B cell (primary cell): ENCODE measurements at regions of chr10 and their contacts with region 1.

Region 1: DNA sequence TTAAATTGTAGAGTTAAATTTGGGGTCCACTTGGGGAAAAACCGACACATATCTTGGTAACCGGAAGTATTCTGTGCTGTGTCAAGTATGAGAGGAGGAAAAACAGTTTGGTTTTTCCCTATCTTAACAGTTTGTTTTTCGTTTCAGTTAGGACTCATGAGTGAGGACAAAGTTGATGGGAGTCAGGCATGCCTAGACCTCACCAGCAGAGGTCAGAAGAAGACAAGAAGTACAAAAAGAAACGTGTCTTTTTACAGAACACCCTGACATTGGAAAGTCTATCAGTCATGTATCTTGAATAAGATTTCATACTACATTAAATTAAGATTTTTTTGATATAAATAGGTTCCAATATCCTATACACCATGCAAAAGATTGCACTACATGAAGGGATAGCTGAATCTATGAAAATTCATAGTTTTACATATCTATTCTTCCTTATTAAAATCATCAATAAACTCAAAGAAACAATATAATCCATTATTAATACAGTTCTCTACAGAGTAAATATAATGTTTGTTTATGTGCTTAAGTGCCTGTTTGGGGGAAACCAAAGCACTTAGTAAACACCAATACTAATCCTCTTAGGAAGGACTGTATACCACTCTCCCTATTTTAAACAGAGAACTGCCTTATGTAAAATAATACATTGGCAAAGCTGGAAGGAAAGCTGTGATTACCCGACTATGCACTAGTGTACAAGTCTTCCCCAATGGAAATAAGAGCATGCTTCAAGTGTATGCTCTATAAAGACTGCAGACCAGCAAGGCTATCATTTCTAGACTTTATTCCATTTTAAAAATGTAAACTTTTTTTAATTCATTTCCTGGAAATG is 95.6 kb downstream of the USP6NL start:
- DNase-seq: peak; percentile 79
- ATAC-seq: peak; percentile 84
- H3K4me3 ChIP-seq: peak overlapping the region in 1 of 5 experiments; percentile 2
- H3K4me3 Mint-ChIP-seq: peak overlapping the region; percentile 18
- H3K27ac ChIP-seq: peak overlapping the region in 1 of 2 donors; percentile 48
- H3K27ac Mint-ChIP-seq: peak overlapping the region; percentile 80
- H3K4me1 ChIP-seq: peaks cover 22% of the 10 kb centered on the region in 2 donors
- H3K4me1 Mint-ChIP-seq: peaks cover 46% of the 10 kb centered on the region
- H3K27me3 ChIP-seq: no peaks in the 10 kb centered on the region
- H3K27me3 Mint-ChIP-seq: no peaks in the 10 kb centered on the region
- CTCF ChIP-seq: peak; percentile 97

Region 2: GRCh38 chr10:11260170-11260569 is 255.6 kb before region 1 on chr10:
- CTCF ChIA-PET with region 1: no interaction called
- POLR2A ChIA-PET with region 1: no interaction called
- intact Hi-C with region 1: no loop called
- DNase-seq: no peak
- ATAC-seq: no peak
- H3K4me3 ChIP-seq: no peak overlapping the region
- H3K4me3 Mint-ChIP-seq: no peak overlapping the region
- H3K27ac ChIP-seq: peak overlapping the region in 1 of 2 donors; percentile 70
- H3K27ac Mint-ChIP-seq: peak overlapping the region; percentile 62
- H3K4me1 ChIP-seq: peaks cover 59 to 71% of the 10 kb centered on the region in 2 donors
- H3K4me1 Mint-ChIP-seq: peaks cover 85% of the 10 kb centered on the region
- H3K27me3 ChIP-seq: no peaks in the 10 kb centered on the region
- H3K27me3 Mint-ChIP-seq: no peaks in the 10 kb centered on the region
- CTCF ChIP-seq: no peak

Region 3: GRCh38 chr10:11397980-11398580 is 117.7 kb before region 1 on chr10:
- CTCF ChIA-PET with region 1: no interaction called
- POLR2A ChIA-PET with region 1: no interaction called
- intact Hi-C with region 1: no loop called
- DNase-seq: no peak
- ATAC-seq: no peak
- H3K4me3 ChIP-seq: no peak overlapping the region
- H3K4me3 Mint-ChIP-seq: no peak overlapping the region
- H3K27ac ChIP-seq: no peak overlapping the region
- H3K27ac Mint-ChIP-seq: no peak overlapping the region
- H3K4me1 ChIP-seq: peaks cover 20 to 21% of the 10 kb centered on the region in 2 donors
- H3K4me1 Mint-ChIP-seq: peaks cover 23% of the 10 kb centered on the region
- H3K27me3 ChIP-seq: no peaks in the 10 kb centered on the region
- H3K27me3 Mint-ChIP-seq: peaks cover 2% of the 10 kb centered on the region
- CTCF ChIP-seq: no peak

Region 4: DNA sequence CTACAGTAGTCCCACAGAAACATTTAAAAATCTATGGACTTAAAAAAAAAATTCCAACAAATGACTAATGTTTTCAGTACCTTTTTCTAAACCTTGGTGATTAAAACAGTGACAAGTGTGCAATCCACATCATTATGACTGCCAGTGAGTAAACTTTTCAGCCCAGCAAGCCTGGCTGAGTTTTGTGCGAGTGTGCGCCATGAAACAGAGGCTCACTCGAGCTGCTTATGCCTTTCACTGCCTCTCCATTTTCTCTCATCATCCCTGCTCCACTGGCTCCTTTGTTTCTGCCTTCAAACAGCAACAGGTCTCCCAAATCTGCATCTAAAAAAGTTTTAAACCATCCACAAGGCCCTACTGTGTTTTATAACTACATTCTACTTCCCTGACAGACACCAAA is 10.2 kb before region 1 on chr10:
- CTCF ChIA-PET with region 1: interaction called, 14 read pairs
- POLR2A ChIA-PET with region 1: no interaction called
- intact Hi-C with region 1: no loop called
- DNase-seq: no peak
- ATAC-seq: no peak
- H3K4me3 ChIP-seq: no peak overlapping the region
- H3K4me3 Mint-ChIP-seq: no peak overlapping the region
- H3K27ac ChIP-seq: no peak overlapping the region
- H3K27ac Mint-ChIP-seq: peak overlapping the region; percentile 28
- H3K4me1 ChIP-seq: no peaks in the 10 kb centered on the region
- H3K4me1 Mint-ChIP-seq: peaks cover 21% of the 10 kb centered on the region
- H3K27me3 ChIP-seq: no peaks in the 10 kb centered on the region
- H3K27me3 Mint-ChIP-seq: no peaks in the 10 kb centered on the region
- CTCF ChIP-seq: no peak

Region 5: GRCh38 chr10:11533328-11533781 is 17.5 kb after region 1 on chr10:
- CTCF ChIA-PET with region 1: interaction called, 12 read pairs
- POLR2A ChIA-PET with region 1: interaction called, 3 read pairs
- intact Hi-C with region 1: loop called (anchors 2 kb)
- DNase-seq: peak; percentile 37
- ATAC-seq: no peak
- H3K4me3 ChIP-seq: no peak overlapping the region
- H3K4me3 Mint-ChIP-seq: peak overlapping the region; percentile 80
- H3K27ac ChIP-seq: peak overlapping the region; percentile 14 to 68
- H3K27ac Mint-ChIP-seq: peak overlapping the region; percentile 94
- H3K4me1 ChIP-seq: peaks cover 62 to 66% of the 10 kb centered on the region in 2 donors
- H3K4me1 Mint-ChIP-seq: peaks cover 89% of the 10 kb centered on the region
- H3K27me3 ChIP-seq: no peaks in the 10 kb centered on the region
- H3K27me3 Mint-ChIP-seq: no peaks in the 10 kb centered on the region
- CTCF ChIP-seq: peak; percentile 22

Region 6: GRCh38 chr10:11560076-11560709 is 44.4 kb after region 1 on chr10:
- CTCF ChIA-PET with region 1: interaction called, 5 read pairs
- POLR2A ChIA-PET with region 1: no interaction called
- intact Hi-C with region 1: loop called (anchors 2 kb)
- DNase-seq: peak; percentile 80
- ATAC-seq: peak; percentile 83
- H3K4me3 ChIP-seq: peak overlapping the region in 4 of 5 experiments; percentile 2 to 25 (median 10)
- H3K4me3 Mint-ChIP-seq: peak overlapping the region; percentile 73
- H3K27ac ChIP-seq: peak overlapping the region; percentile 87 to 93
- H3K27ac Mint-ChIP-seq: peak overlapping the region; percentile 95
- H3K4me1 ChIP-seq: peaks cover 53 to 78% of the 10 kb centered on the region in 2 donors
- H3K4me1 Mint-ChIP-seq: peaks cover 81% of the 10 kb centered on the region
- H3K27me3 ChIP-seq: no peaks in the 10 kb centered on the region
- H3K27me3 Mint-ChIP-seq: no peaks in the 10 kb centered on the region
- CTCF ChIP-seq: no peak

Region 7: DNA sequence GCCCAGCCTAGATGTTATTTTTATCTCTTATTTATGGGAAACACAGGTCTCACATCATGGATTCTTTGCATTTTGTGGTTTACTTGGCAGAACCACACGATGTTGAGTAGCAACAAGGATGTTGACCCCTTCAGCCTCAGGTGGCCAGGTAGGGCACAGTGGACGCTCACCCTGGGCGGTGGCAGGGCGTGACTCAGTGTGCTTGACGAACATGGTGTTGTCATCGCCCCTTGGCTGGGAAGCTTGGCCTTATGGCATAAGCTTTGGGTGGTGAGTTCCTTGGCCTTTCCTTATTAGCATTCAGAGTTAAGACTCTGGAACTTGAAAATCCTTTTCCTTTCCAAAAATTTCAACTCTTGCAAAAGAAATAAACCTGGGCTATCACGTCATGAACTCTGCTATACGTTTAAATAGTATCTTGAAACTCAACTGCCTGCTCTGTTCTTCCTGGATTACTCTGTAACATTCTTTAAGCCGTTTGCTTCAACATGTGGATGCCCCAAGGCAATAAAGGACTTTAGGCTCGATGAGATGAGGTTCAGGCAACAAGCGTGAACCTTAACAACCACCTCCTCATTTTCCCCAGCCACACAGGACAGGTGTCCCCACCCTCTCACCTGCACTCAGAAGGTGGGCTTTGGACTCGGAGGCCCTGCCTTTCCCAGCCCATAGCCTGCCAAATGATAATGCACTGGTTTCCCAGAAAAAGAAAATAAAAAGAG is 203.8 kb after region 1 on chr10:
- CTCF ChIA-PET with region 1: interaction called, 183 read pairs
- POLR2A ChIA-PET with region 1: interaction called, 4 read pairs
- intact Hi-C with region 1: loop called (anchors 2 kb)
- DNase-seq: no peak
- ATAC-seq: no peak
- H3K4me3 ChIP-seq: no peak overlapping the region
- H3K4me3 Mint-ChIP-seq: peak overlapping the region; percentile 52
- H3K27ac ChIP-seq: no peak overlapping the region
- H3K27ac Mint-ChIP-seq: peak overlapping the region; percentile 75
- H3K4me1 ChIP-seq: peaks cover 34 to 47% of the 10 kb centered on the region in 2 donors
- H3K4me1 Mint-ChIP-seq: peaks cover 57% of the 10 kb centered on the region
- H3K27me3 ChIP-seq: no peaks in the 10 kb centered on the region
- H3K27me3 Mint-ChIP-seq: no peaks in the 10 kb centered on the region
- CTCF ChIP-seq: no peak

Region 8: GRCh38 chr10:11724938-11725776 is 209.3 kb after region 1 on chr10:
- CTCF ChIA-PET with region 1: interaction called, 183 read pairs
- POLR2A ChIA-PET with region 1: interaction called, 4 read pairs
- intact Hi-C with region 1: loop called (anchors 1 kb)
- DNase-seq: peak; percentile 79
- ATAC-seq: peak; percentile 87
- H3K4me3 ChIP-seq: no peak overlapping the region
- H3K4me3 Mint-ChIP-seq: peak overlapping the region; percentile 27
- H3K27ac ChIP-seq: no peak overlapping the region
- H3K27ac Mint-ChIP-seq: peak overlapping the region; percentile 72
- H3K4me1 ChIP-seq: peaks cover 19 to 24% of the 10 kb centered on the region in 2 donors
- H3K4me1 Mint-ChIP-seq: peaks cover 27% of the 10 kb centered on the region
- H3K27me3 ChIP-seq: no peaks in the 10 kb centered on the region
- H3K27me3 Mint-ChIP-seq: no peaks in the 10 kb centered on the region
- CTCF ChIP-seq: peak; percentile 86